ENCODE measurements at regions of chr11 and their contacts with region 1.

Region 1: GRCh38 chr11:75280227-75280701 is 39.7 kb downstream of the TPBGL start:
- DNase-seq: peak; percentile 88
- ATAC-seq: peak; percentile 94
- H3K4me3 Mint-ChIP-seq: no peak overlapping the region
- H3K27ac Mint-ChIP-seq: peak overlapping the region; percentile 82
- H3K4me1 Mint-ChIP-seq: peaks cover 36% of the 10 kb centered on the region
- H3K27me3 Mint-ChIP-seq: no peaks in the 10 kb centered on the region
- CTCF ChIP-seq: peak; percentile 94

Region 2: DNA sequence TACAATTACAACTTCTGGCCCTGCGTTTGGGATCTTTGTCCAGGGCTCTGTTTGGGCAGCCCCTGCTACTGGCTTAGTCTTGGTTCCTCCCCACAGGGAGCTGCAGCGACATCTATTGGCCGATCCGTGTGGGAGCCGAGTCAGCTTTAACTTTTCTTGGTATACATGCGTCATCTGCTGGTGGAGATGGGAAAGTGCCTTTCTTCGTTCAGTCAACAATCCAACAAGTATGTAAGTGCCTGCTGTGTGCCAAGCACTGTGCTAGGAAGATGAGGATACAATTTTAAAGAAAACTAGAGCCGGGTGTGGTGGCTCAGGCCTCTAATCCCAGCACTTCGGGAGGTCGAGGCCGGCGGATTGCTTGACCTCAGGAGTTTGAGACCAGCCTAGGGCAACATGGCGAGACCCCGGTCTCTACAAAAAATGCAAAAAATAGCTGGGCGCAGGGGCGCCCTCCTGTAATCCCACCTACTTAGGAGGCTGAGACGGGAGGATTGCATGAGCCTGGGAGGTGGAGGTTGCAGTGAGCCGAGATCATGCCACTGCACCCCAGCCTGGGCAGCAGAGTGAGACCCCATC is 31.5 kb before region 1 on chr11:
- CTCF ChIA-PET with region 1: interaction called, 10 read pairs
- POLR2A ChIA-PET with region 1: interaction called, 3 read pairs
- DNase-seq: peak; percentile 94
- ATAC-seq: peak; percentile 89
- H3K4me3 Mint-ChIP-seq: no peak overlapping the region
- H3K27ac Mint-ChIP-seq: no peak overlapping the region
- H3K4me1 Mint-ChIP-seq: no peaks in the 10 kb centered on the region
- H3K27me3 Mint-ChIP-seq: peaks cover 68% of the 10 kb centered on the region
- CTCF ChIP-seq: peak; percentile 86

Region 3: DNA sequence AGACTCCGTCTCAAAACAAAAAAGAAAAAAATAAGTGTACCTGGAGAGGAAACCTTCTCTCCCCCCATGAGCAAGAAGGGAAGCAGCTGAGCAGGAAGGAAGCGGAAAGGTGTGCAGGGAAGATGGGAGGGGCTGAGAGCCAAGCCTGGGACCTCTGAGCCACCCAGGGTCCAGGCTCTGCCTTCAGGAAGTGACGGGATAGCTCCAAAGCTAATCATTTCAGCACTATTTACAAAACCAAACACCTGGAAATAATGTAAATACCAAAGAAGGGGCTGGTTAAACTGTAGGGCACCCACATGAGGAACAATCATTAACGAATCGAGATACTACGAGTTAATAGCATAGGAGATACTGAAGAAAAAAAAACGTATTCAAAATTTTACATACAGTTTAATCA is 43.3 kb after region 1 on chr11:
- CTCF ChIA-PET with region 1: interaction called, 10 read pairs
- POLR2A ChIA-PET with region 1: no interaction called
- DNase-seq: no peak
- ATAC-seq: peak; percentile 60
- H3K4me3 Mint-ChIP-seq: no peak overlapping the region
- H3K27ac Mint-ChIP-seq: peak overlapping the region; percentile 71
- H3K4me1 Mint-ChIP-seq: peaks cover 77% of the 10 kb centered on the region
- H3K27me3 Mint-ChIP-seq: no peaks in the 10 kb centered on the region
- CTCF ChIP-seq: no peak

Region 4: GRCh38 chr11:75334976-75335375 is 54.7 kb after region 1 on chr11:
- CTCF ChIA-PET with region 1: interaction called, 36 read pairs
- POLR2A ChIA-PET with region 1: no interaction called
- DNase-seq: peak; percentile 62
- ATAC-seq: peak; percentile 66
- H3K4me3 Mint-ChIP-seq: no peak overlapping the region
- H3K27ac Mint-ChIP-seq: peak overlapping the region; percentile 98
- H3K4me1 Mint-ChIP-seq: peaks cover 98% of the 10 kb centered on the region
- H3K27me3 Mint-ChIP-seq: no peaks in the 10 kb centered on the region
- CTCF ChIP-seq: no peak

Region 5: GRCh38 chr11:75351791-75352587 is 71.7 kb after region 1 on chr11:
- CTCF ChIA-PET with region 1: interaction called, 34 read pairs
- POLR2A ChIA-PET with region 1: interaction called, 4 read pairs
- DNase-seq: peak; percentile 66
- ATAC-seq: peak; percentile 73
- H3K4me3 Mint-ChIP-seq: peak overlapping the region; percentile 73
- H3K27ac Mint-ChIP-seq: 0 out of 2 replicates have a peak overlapping the region, but pooled peaks have one; percentile 30
- H3K4me1 Mint-ChIP-seq: peaks cover 58% of the 10 kb centered on the region
- H3K27me3 Mint-ChIP-seq: peaks cover 8% of the 10 kb centered on the region
- CTCF ChIP-seq: no peak

Region 6: GRCh38 chr11:75388386-75389275 is 108.4 kb after region 1 on chr11:
- CTCF ChIA-PET with region 1: interaction called, 89 read pairs
- POLR2A ChIA-PET with region 1: interaction called, 4 read pairs
- DNase-seq: peak; percentile 75
- ATAC-seq: peak; percentile 78
- H3K4me3 Mint-ChIP-seq: no peak overlapping the region
- H3K27ac Mint-ChIP-seq: no peak overlapping the region
- H3K4me1 Mint-ChIP-seq: peaks cover 20% of the 10 kb centered on the region
- H3K27me3 Mint-ChIP-seq: peaks cover 2% of the 10 kb centered on the region; the same call in 1 of the 2 replicates
- CTCF ChIP-seq: peak; percentile 69

Region 7: GRCh38 chr11:75532200-75533048 is 252.2 kb after region 1 on chr11:
- CTCF ChIA-PET with region 1: interaction called, 11 read pairs
- POLR2A ChIA-PET with region 1: no interaction called
- DNase-seq: peak; percentile 88
- ATAC-seq: peak; percentile 89
- H3K4me3 Mint-ChIP-seq: peak overlapping the region; percentile 44
- H3K27ac Mint-ChIP-seq: peak overlapping the region; percentile 39; the same call in 1 of the 2 replicates
- H3K4me1 Mint-ChIP-seq: peaks cover 18% of the 10 kb centered on the region
- H3K27me3 Mint-ChIP-seq: peaks cover 2% of the 10 kb centered on the region; the same call in 1 of the 2 replicates
- CTCF ChIP-seq: peak; percentile 72

Measured in WTC11 (cell line).